ENCODE measurements at regions of chr14 and their contacts with region 1.

Region 1: DNA sequence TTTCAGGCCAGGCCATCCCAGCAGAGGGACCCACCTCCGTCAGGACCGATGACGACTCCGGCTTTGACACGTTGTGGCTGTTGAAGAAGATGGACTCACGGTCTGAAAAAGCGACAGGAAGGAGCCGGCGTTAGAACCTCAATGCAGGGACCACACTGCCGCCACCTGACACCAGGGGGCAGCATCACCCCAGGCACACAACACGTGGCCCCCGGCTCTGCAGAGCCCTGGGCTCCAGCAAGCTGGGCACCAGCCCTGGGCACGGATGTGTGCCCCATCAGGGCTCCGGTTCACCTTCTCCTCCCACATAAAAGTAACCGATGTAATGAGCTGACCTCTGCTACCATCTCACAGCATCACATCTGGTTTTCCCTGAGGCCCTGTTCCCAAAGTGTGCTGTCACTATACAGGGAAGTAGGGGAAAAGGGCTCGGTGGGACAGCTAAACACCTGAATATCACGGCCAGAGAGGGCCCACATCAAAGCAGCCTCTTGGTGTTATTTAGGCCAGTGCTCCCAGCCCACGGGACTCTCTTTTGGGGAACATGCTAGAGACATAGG is 29.0 kb downstream of the CHGA start:
- DNase-seq: peak; percentile 88
- H3K4me3 ChIP-seq: no peak overlapping the region
- H3K27ac ChIP-seq: no peak overlapping the region
- H3K4me1 ChIP-seq: peaks cover 31% of the 10 kb centered on the region
- H3K27me3 ChIP-seq: no peaks in the 10 kb centered on the region
- CTCF ChIP-seq: peak; percentile 92 to 94 (median 94)
- POLR2A ChIP-seq: no peak

Region 2: DNA sequence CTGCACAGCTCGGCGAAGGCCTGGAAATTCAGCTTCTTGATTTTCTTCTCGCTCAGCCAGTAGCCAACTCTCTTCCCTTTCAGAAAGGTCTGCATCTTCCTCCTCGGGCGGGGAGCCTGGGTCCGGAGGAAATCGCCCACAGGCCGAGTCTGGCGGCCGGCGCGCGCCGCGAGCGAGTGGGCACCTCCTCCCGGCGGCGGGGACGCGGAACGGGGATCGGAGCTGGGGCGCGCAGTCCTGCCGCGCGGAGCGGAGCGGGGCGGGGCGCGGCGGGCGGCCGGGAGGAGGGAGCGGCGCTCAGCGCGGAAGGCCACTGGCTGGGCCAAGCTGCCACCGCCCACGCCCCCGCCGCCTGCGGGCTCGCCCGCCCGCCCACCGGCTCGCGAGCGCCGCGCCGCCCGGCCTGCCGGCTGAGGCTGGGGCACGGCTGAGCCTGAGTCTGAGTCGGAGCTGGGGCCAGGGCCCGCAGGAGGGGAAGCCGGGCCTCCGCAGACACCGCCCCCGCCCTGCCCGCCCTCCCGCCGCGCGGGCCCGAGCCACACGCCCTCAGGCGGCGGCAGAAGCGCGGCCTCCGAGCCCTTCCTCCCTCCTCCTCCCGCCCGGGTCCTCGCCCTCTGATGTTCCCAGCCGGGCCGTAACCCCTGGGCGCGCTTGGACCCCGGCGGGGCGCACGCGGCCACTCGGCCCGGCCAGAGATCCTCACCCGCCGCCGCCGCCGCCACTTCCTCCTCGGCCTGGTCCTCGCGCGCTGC is 163.3 kb after region 1 on chr14:
- intact Hi-C with region 1: loop called (anchors 5 kb)
- DNase-seq: peak; percentile 85
- H3K4me3 ChIP-seq: peak overlapping the region; percentile 71 to 82
- H3K27ac ChIP-seq: peak overlapping the region; percentile 81 to 97
- H3K4me1 ChIP-seq: peaks cover 22% of the 10 kb centered on the region
- H3K27me3 ChIP-seq: no peaks in the 10 kb centered on the region
- CTCF ChIP-seq: no peak
- POLR2A ChIP-seq: no peak

Region 3: GRCh38 chr14:93128725-93129459 is 176.9 kb after region 1 on chr14:
- intact Hi-C with region 1: no loop called
- DNase-seq: no peak
- H3K4me3 ChIP-seq: no peak overlapping the region
- H3K27ac ChIP-seq: no peak overlapping the region
- H3K4me1 ChIP-seq: peaks cover 5% of the 10 kb centered on the region
- H3K27me3 ChIP-seq: no peaks in the 10 kb centered on the region
- CTCF ChIP-seq: no peak
- POLR2A ChIP-seq: no peak

Region 4: DNA sequence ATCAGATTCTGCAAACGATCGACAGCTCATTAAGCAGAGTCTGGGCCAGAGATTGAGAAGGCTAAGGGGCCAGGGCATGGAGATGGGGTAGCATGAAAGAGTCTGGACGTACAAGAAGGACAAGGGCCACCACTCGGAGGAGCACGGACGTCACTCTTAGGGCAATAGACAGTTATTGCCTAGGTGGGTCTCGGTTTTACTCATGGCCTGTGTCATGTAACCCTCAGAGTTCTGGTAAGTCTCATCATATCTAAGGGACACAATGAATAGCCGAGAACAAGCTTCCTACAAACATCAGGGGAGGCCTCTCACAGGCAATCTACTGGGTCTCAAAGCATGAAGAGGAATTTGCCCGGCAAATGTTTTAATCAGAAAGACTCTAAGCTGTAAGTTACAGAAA is 194.1 kb after region 1 on chr14:
- intact Hi-C with region 1: no loop called
- DNase-seq: no peak
- H3K4me3 ChIP-seq: no peak overlapping the region
- H3K27ac ChIP-seq: no peak overlapping the region
- H3K4me1 ChIP-seq: peaks cover 2% of the 10 kb centered on the region
- H3K27me3 ChIP-seq: no peaks in the 10 kb centered on the region
- CTCF ChIP-seq: no peak
- POLR2A ChIP-seq: no peak

Measured in testis (tissue), 5 donors.